Testis (tissue), 5 donors: ENCODE measurements at regions of chr12 and their contacts with region 1.

Region 1: GRCh38 chr12:117845271-117845904 is 123.4 kb downstream of the KSR2 start:
- DNase-seq: no peak
- H3K4me3 ChIP-seq: no peak overlapping the region
- H3K27ac ChIP-seq: no peak overlapping the region
- H3K4me1 ChIP-seq: no peaks in the 10 kb centered on the region
- H3K27me3 ChIP-seq: no peaks in the 10 kb centered on the region
- CTCF ChIP-seq: no peak
- POLR2A ChIP-seq: no peak

Region 2: GRCh38 chr12:117212563-117213190 is 632.7 kb before region 1 on chr12:
- intact Hi-C with region 1: loop called (anchors 10 kb)
- DNase-seq: peak; percentile 91
- H3K4me3 ChIP-seq: no peak overlapping the region
- H3K27ac ChIP-seq: no peak overlapping the region
- H3K4me1 ChIP-seq: peaks cover 17% of the 10 kb centered on the region
- H3K27me3 ChIP-seq: no peaks in the 10 kb centered on the region
- CTCF ChIP-seq: peak; percentile 78 to 91 (median 90)
- POLR2A ChIP-seq: no peak

Region 3: GRCh38 chr12:117367011-117367638 is 478.3 kb before region 1 on chr12:
- intact Hi-C with region 1: no loop called
- DNase-seq: peak; percentile 91
- H3K4me3 ChIP-seq: no peak overlapping the region
- H3K27ac ChIP-seq: no peak overlapping the region
- H3K4me1 ChIP-seq: no peaks in the 10 kb centered on the region
- H3K27me3 ChIP-seq: no peaks in the 10 kb centered on the region
- CTCF ChIP-seq: peak in 2 of 3 experiments; percentile 85 to 87
- POLR2A ChIP-seq: no peak

Region 4: DNA sequence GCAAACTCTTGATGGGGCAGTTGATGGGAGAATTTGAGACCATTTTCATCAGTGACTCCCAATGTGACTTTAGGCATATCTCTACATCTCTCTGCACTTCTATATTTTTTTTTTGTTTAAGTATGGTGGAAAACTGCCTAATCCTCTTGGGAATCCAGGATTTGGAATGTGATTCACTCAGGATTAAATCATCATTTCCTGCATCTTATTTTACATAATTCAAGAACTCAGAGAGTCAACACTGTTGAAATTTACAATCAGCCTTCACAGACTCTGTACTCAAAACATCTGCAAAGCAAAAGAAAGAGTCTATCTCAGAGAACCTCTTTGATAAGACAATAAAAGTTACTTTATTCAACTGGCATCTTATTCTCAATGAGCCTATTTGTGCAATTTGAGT is 223.3 kb before region 1 on chr12:
- intact Hi-C with region 1: no loop called
- DNase-seq: no peak
- H3K4me3 ChIP-seq: no peak overlapping the region
- H3K27ac ChIP-seq: no peak overlapping the region
- H3K4me1 ChIP-seq: no peaks in the 10 kb centered on the region
- H3K27me3 ChIP-seq: no peaks in the 10 kb centered on the region
- CTCF ChIP-seq: no peak
- POLR2A ChIP-seq: no peak

Region 5: GRCh38 chr12:118055144-118055557 is 209.8 kb after region 1 on chr12:
- intact Hi-C with region 1: no loop called
- DNase-seq: peak; percentile 62
- H3K4me3 ChIP-seq: no peak overlapping the region
- H3K27ac ChIP-seq: no peak overlapping the region
- H3K4me1 ChIP-seq: peaks cover 19% of the 10 kb centered on the region
- H3K27me3 ChIP-seq: no peaks in the 10 kb centered on the region
- CTCF ChIP-seq: peak in 2 of 3 experiments; percentile 36 to 47
- POLR2A ChIP-seq: no peak